Activated T-helper 1 cell treated with anti-CD3 and anti-CD28 coated beads, Interleukin-12 subunit alpha, Interleukin-12 subunit beta, Interleukin-2, Interleukin-4 antibody, amounts not matched to agents 30 ng/mL and 10 ng/mL and 1 ng/mL, durations not matched to agents 14 hours and 24 hours and 36 hours (primary cell): ENCODE measurements at regions of chr10 and their contacts with region 1.

Region 1: DNA sequence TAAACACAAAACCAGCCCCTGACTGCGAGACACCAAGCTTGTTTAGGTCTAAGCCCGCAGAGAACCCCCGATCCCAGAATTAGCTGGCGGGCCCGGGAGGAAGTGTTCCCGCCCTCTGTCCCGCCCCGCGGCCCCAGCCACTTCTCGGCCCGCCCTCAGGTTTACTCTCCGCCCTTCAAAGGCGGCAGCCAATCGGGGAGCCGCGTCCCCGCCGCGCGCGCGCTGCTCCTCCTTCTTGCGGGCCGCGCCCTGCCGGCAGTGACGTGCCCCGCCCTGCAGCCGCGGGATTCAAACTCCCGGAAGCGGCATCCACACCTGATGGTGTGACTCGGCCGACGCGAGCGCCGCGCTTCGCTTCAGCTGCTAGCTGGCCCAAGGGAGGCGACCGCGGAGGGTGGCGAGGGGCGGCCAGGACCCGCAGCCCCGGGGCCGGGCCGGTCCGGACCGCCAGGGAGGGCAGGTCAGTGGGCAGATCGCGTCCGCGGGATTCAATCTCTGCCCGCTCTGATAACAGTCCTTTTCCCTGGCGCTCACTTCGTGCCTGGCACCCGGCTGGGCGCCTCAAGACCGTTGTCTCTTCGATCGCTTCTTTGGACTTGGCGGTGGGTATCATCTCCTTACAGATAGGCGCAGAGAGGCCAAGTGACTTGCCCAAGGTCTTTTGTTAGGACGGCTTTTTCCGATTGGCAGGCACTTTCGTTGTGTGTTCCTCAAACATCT is at the start of gene CEP55:
- DNase-seq: peak; percentile 96
- H3K4me3 Mint-ChIP-seq: peak within 1 kb of the TSS; percentile 88
- H3K27ac Mint-ChIP-seq: peak within 1 kb of the TSS; percentile 95
- H3K4me1 Mint-ChIP-seq: peaks cover 46% of the 10 kb centered on the region
- H3K27me3 Mint-ChIP-seq: no peaks in the 10 kb centered on the region
- total RNA-seq, gene CEP55: 53.0 and 55.7 TPM in 2 replicates

Region 2: GRCh38 chr10:93515071-93516005 is 18.9 kb after region 1 on chr10:
- intact Hi-C with region 1: loop called (anchors 1 kb)
- DNase-seq: no peak
- H3K4me3 Mint-ChIP-seq: no peak overlapping the region
- H3K27ac Mint-ChIP-seq: no peak overlapping the region
- H3K4me1 Mint-ChIP-seq: peaks cover 4% of the 10 kb centered on the region
- H3K27me3 Mint-ChIP-seq: no peaks in the 10 kb centered on the region

Region 3: GRCh38 chr10:93893646-93894515 is 397.4 kb after region 1 on chr10 and contains the start of gene SLC35G1:
- intact Hi-C with region 1: loop called (anchors 10 kb)
- DNase-seq: peak; percentile 57
- H3K4me3 Mint-ChIP-seq: peak within 1 kb of the TSS; percentile 85
- H3K27ac Mint-ChIP-seq: peak within 1 kb of the TSS; percentile 57
- H3K4me1 Mint-ChIP-seq: peaks cover 40% of the 10 kb centered on the region
- H3K27me3 Mint-ChIP-seq: peaks cover 6% of the 10 kb centered on the region
- total RNA-seq, gene SLC35G1: 5.6 and 5.8 TPM in 2 replicates